Endothelial cell of umbilical vein (primary cell): ENCODE measurements at regions of chr3 and their contacts with region 1.

Region 1: DNA sequence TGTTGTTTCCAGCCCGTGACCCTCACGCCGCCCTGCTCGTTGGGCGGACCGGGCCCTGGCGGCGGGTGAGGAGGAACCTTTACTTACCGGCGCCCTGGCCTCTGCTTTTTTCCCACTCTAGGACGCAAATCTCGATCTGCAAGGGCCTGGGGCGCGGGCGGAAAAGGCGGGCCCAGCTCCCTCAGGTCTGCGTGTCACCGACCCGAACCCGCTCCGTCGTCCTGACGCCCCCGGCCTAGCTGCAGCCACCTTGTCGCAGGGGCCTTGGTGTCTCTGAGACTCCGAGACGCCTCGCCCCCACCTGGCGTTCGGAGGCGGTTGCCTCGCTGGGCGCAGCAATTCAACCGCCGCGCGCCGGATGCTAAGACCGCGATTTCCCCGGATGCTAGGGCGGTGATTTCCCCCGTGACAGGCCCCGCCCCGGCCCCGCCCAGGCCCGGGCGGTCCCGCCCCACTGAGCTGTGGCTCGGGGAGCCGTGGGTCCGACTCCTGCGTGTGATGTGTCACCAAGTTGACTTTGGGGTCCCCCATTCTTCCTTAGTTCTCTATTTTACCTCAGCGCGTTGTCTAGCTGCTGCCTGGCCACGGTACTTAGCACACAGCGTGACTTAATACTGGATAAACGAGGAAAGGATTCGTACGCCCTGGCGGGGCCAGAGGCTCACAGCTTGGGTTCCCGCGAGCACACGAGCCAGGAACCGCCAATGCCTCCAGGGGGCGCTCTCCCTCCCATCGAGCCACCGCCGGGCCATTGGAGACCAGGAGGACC is at the start of gene RPL39L:
- DNase-seq: peak; percentile 87
- H3K4me3 ChIP-seq: peak within 1 kb of the TSS; percentile 44 to 67 (median 54)
- H3K27ac ChIP-seq: peak within 1 kb of the TSS; percentile 55
- H3K4me1 ChIP-seq: peaks cover 4% of the 10 kb centered on the region
- H3K27me3 ChIP-seq: peaks cover 0 to 6% of the 10 kb centered on the region in 2 experiments
- CTCF ChIP-seq: peak; percentile 95 to 97
- POLR2A ChIP-seq: peak; percentile 83
- total RNA-seq, gene RPL39L: 16.8 and 22.3 TPM in 2 replicates

Region 2: DNA sequence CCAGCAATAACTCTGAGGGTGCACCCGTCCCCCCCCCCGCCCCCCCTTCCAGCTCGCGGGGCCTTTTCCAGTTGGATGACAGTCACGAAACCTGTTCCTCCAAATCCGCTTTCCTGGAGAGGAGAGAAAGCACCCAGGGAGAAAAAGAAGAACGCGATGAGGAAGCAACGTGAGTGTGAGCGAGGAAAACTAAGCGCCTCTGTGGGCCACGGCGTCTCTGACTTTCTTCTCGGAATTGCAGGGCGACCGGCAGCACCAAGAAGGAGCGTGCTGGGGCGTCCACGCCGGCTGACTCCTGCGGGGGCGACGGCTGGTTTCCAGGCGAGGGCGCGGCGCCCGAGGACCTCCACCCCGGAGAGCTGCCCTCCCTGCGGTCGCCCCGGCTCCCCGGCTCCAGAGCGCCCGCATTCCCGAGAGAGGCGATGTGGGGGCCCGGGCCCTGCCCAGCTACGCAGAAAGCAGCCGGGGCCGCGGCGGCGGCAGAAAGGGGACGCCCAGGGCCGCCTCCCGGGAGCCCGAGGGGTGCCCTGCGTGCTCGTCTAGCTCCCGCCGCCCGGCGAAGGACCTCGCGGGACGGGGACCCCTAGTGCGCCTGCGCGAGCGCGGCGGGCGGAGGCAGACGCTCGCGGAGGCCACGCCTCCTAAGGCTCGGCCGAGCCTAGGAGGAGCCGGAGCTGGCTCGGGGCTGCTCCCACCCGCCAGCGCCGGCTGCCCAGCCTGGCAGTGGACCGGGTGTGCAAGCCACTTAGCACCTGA is 312.2 kb before region 1 on chr3:
- CTCF ChIA-PET with region 1: interaction called, 11 read pairs
- POLR2A ChIA-PET with region 1: no interaction called
- dilution Hi-C with region 1: no loop called
- intact Hi-C with region 1: no loop called
- DNase-seq: peak; percentile 78
- H3K4me3 ChIP-seq: peak overlapping the region; percentile 28 to 69 (median 52)
- H3K27ac ChIP-seq: no peak overlapping the region
- H3K4me1 ChIP-seq: peaks cover 6% of the 10 kb centered on the region
- H3K27me3 ChIP-seq: peaks cover 30 to 37% of the 10 kb centered on the region in 2 experiments
- CTCF ChIP-seq: no peak
- POLR2A ChIP-seq: peak; percentile 82

Region 3: GRCh38 chr3:187112934-187113793 is 26.1 kb before region 1 on chr3:
- CTCF ChIA-PET with region 1: interaction called, 86 read pairs
- POLR2A ChIA-PET with region 1: no interaction called
- dilution Hi-C with region 1: no loop called
- intact Hi-C with region 1: no loop called
- DNase-seq: peak; percentile 64
- H3K4me3 ChIP-seq: no peak overlapping the region
- H3K27ac ChIP-seq: no peak overlapping the region
- H3K4me1 ChIP-seq: no peaks in the 10 kb centered on the region
- H3K27me3 ChIP-seq: no peaks in the 10 kb centered on the region
- CTCF ChIP-seq: peak; percentile 30 to 39
- POLR2A ChIP-seq: no peak

Region 4: DNA sequence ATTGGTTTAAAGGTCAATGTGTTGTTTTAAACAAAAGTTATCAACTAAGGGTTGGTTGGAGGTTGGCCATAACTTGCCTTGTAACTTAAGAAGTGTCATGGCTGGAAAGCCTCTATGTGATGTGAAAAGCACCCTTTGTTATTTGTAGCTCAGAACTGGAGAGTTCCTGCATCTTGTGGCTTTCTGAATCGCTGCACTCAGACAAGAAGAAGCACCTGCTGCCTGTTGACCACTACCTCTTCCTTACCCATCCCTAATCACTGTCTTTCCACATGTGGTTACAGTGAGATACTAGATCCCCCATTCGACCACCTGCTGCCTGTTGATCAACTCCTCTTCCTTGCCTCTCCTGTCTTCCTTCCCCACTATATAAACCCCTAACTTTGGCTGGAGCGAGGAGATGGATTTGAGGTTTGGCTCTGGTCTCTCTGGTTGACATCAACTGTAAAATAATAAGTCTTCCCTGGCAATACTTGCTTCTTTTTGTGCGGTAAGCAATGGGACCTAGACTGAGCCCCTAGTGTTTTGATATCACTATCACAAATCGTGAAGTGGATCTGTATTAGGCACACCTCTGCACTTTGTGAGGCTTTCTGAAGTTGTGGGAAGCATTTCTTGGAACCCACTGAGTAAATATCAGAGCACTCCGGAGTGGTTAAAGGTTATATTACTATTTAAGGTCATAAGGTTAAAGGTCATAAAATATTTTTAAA is 13.8 kb before region 1 on chr3:
- CTCF ChIA-PET with region 1: interaction called, 36 read pairs
- POLR2A ChIA-PET with region 1: no interaction called
- dilution Hi-C with region 1: no loop called
- intact Hi-C with region 1: no loop called
- DNase-seq: no peak
- H3K4me3 ChIP-seq: no peak overlapping the region
- H3K27ac ChIP-seq: no peak overlapping the region
- H3K4me1 ChIP-seq: peaks cover 4% of the 10 kb centered on the region
- H3K27me3 ChIP-seq: no peaks in the 10 kb centered on the region
- CTCF ChIP-seq: no peak
- POLR2A ChIP-seq: no peak

Region 5: DNA sequence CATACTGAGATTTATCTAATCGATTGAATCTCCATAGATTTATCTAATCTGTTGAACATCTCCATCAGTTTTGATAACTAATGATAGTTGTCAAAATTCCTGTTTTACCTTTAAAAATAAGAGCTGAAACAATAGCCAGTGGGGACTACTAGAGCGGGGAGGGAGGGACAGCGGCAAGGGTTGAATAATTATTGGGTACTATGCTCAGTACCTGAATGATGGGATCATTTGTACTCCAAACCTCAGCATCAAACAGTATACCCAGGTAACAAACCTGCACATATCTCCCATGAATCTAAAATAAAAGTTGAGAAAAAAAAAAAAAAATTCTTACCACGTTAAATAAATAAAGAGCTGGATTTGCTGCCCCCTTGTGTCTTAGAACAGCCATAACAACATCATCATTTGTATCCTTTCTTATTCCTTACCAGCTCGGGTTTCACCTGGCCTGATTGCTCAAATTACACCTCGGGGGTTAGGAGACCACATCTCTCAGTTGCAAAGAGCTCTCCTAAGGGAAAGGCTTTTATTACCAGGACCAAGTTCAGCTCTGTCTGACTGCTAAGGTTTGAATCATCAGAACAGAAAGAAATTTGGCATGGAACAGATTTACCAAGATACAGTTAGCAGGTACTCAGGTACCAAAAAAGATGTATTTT is 25.7 kb after region 1 on chr3:
- CTCF ChIA-PET with region 1: interaction called, 109 read pairs
- POLR2A ChIA-PET with region 1: no interaction called
- dilution Hi-C with region 1: no loop called
- intact Hi-C with region 1: loop called (anchors 1 kb)
- DNase-seq: peak; percentile 62
- H3K4me3 ChIP-seq: no peak overlapping the region
- H3K27ac ChIP-seq: no peak overlapping the region
- H3K4me1 ChIP-seq: no peaks in the 10 kb centered on the region
- H3K27me3 ChIP-seq: peaks cover 17 to 28% of the 10 kb centered on the region in 2 experiments
- CTCF ChIP-seq: peak; percentile 54 to 61
- POLR2A ChIP-seq: no peak

Region 6: DNA sequence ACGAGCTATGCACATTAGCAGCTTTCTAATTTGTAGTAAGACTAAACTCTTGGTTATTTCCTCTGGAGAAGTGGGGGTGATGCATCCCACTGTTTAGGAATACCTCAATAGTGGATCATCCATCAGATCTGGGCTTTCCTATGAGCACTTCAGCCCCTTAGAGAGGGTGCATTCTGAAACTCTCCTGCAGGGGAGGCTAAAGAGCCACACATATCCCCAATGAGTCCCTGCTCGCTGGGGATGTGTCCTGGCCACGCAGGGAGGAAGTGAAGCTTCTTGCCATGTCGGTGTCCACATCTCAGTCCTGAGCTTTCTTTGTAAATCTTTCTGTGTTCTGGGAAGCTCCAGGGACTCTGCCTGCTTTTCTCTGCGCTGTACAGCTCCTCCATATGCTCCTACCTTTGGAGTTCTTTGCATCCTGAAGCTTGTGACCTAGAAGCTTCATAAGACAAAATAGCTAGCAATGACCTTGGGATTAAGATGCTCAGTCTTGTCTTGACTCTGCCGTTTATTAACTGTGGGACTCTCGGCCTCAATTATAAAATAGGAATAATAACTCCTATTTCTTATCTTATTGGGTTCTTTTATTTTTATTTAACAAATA is 180.5 kb after region 1 on chr3:
- CTCF ChIA-PET with region 1: no interaction called
- POLR2A ChIA-PET with region 1: no interaction called
- dilution Hi-C with region 1: no loop called
- intact Hi-C with region 1: no loop called
- DNase-seq: peak; percentile 53
- H3K4me3 ChIP-seq: no peak overlapping the region
- H3K27ac ChIP-seq: no peak overlapping the region
- H3K4me1 ChIP-seq: peaks cover 8% of the 10 kb centered on the region
- H3K27me3 ChIP-seq: peaks cover 0 to 3% of the 10 kb centered on the region in 2 experiments
- CTCF ChIP-seq: peak; percentile 60 to 67
- POLR2A ChIP-seq: no peak